GM12878 (cell line): ENCODE measurements at regions of chr19 and their contacts with region 1.

Region 1: GRCh38 chr19:40650749-40651305 is 39.6 kb downstream of the NUMBL start:
- DNase-seq: no peak
- ATAC-seq: no peak
- H3K4me3 ChIP-seq: no peak overlapping the region
- H3K27ac ChIP-seq: no peak overlapping the region
- H3K4me1 ChIP-seq: peaks cover 10% of the 10 kb centered on the region; the same call in 1 of the 2 replicates
- H3K27me3 ChIP-seq: no peaks in the 10 kb centered on the region
- CTCF ChIP-seq: no peak
- EP300 ChIP-seq: no peak
- POLR2A ChIP-seq: no peak
- RAD21 ChIP-seq: no peak

Region 2: DNA sequence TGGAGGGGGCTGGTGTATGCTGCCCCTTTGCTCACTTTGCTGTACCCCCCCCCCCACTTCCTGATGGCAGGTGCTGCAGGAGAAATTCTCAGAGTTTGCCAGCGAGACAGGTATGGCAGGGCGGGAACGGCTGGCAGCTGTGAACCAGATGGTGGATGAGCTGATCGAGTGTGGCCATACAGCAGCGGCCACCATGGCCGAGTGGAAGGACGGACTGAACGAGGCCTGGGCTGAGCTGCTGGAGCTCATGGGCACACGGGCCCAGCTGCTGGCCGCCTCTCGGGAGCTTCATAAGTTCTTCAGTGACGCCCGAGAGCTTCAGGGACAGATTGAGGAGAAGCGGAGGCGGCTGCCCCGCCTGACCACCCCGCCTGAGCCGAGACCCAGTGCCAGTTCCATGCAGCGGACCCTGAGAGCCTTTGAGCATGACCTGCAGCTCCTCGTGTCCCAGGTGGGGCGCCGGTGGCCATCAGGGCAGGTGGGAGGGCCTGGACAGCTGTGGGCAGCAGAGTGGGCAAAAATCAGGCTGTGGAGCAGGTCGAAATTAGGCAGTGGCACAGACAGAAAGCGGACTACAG is 93.8 kb before region 1 on chr19:
- CTCF ChIA-PET with region 1: no interaction called
- POLR2A ChIA-PET with region 1: interaction called, 12 read pairs
- RAD21 ChIA-PET with region 1: no interaction called
- SMC1A ChIA-PET with region 1: no interaction called
- in situ Hi-C with region 1: no loop called
- intact Hi-C with region 1: no loop called
- DNase-seq: no peak
- ATAC-seq: no peak
- H3K4me3 ChIP-seq: no peak overlapping the region
- H3K27ac ChIP-seq: no peak overlapping the region
- H3K4me1 ChIP-seq: no peaks in the 10 kb centered on the region
- H3K27me3 ChIP-seq: peaks cover 3 to 5% of the 10 kb centered on the region in 2 experiments; a peak in 2 of 4 replicates
- CTCF ChIP-seq: no peak
- EP300 ChIP-seq: no peak
- POLR2A ChIP-seq: no peak
- RAD21 ChIP-seq: no peak

Region 3: DNA sequence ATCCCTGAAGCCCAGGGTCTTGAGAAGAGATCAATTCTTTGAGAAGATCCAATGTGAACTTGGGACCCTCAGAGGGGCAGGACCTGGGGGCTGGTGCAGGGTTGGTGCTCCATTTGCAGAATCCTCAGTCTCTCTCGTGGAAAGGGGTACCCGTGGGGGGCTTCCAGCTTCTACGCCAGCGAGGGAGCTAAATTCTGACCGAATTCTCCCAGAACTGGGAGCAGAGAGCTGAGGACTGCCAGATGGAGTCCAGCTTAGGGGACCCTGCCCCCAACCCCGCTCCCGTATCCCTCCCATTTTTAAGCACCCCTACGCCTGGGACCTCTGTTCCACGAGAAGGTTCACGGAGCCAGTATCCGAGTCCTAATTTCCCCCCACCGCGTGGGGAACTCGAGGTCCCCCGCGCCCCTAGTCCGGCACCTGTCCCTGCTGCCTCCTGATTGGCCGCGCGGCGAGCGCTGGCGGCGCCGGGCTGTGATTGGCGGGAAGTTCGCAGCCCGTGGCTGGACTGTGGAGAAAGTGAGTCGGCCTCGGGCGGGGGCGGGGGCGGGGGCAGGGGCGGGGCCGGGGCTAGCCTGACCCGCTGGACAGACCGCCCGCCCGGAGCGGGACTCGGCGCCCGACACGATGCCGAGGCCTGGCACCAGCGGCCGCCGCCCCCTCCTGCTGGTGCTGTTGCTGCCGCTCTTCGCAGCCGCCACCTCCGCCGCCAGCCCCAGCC is 54.1 kb before region 1 on chr19:
- CTCF ChIA-PET with region 1: no interaction called
- POLR2A ChIA-PET with region 1: no interaction called
- RAD21 ChIA-PET with region 1: no interaction called
- SMC1A ChIA-PET with region 1: no interaction called
- in situ Hi-C with region 1: no loop called
- intact Hi-C with region 1: no loop called
- DNase-seq: no peak
- ATAC-seq: no peak; the same call in 2 of the 3 replicates
- H3K4me3 ChIP-seq: no peak overlapping the region
- H3K27ac ChIP-seq: no peak overlapping the region
- H3K4me1 ChIP-seq: peaks cover 11% of the 10 kb centered on the region
- H3K27me3 ChIP-seq: peaks cover 11 to 14% of the 10 kb centered on the region in 2 experiments
- CTCF ChIP-seq: no peak
- EP300 ChIP-seq: no peak
- POLR2A ChIP-seq: no peak
- RAD21 ChIP-seq: no peak

Region 4: GRCh38 chr19:40941481-40942219 is 290.8 kb after region 1 on chr19:
- CTCF ChIA-PET with region 1: no interaction called
- POLR2A ChIA-PET with region 1: no interaction called
- RAD21 ChIA-PET with region 1: no interaction called
- SMC1A ChIA-PET with region 1: no interaction called
- in situ Hi-C with region 1: no loop called
- intact Hi-C with region 1: no loop called
- DNase-seq: no peak
- ATAC-seq: no peak
- H3K4me3 ChIP-seq: no peak overlapping the region
- H3K27ac ChIP-seq: no peak overlapping the region
- H3K4me1 ChIP-seq: no peaks in the 10 kb centered on the region
- H3K27me3 ChIP-seq: no peaks in the 10 kb centered on the region
- CTCF ChIP-seq: no peak
- EP300 ChIP-seq: no peak
- POLR2A ChIP-seq: no peak
- RAD21 ChIP-seq: no peak

Region 5: DNA sequence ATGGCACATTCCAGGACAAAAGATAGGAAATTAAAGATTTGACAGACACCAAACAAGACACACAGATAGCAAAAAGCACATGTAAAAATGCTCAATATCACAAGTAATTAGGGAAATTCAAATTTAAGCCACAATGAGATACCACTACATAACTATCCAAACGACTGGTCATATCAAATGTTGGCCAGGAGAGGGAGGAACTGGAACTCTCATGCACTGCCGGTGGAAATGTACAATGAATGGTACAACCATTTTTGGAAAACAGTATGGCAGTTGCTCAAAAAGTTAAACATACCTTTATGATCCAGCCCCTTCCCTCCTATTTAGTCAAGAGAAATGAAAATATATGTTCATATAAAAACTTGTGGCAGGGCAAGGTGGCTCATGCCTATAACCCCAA is 505.4 kb after region 1 on chr19:
- CTCF ChIA-PET with region 1: no interaction called
- POLR2A ChIA-PET with region 1: no interaction called
- RAD21 ChIA-PET with region 1: no interaction called
- SMC1A ChIA-PET with region 1: no interaction called
- in situ Hi-C with region 1: loop called (anchors 10 kb)
- intact Hi-C with region 1: no loop called
- DNase-seq: no peak
- ATAC-seq: no peak
- H3K4me3 ChIP-seq: no peak overlapping the region
- H3K27ac ChIP-seq: no peak overlapping the region
- H3K4me1 ChIP-seq: no peaks in the 10 kb centered on the region
- H3K27me3 ChIP-seq: no peaks in the 10 kb centered on the region
- CTCF ChIP-seq: no peak
- EP300 ChIP-seq: no peak
- POLR2A ChIP-seq: no peak
- RAD21 ChIP-seq: no peak